Heart left ventricle (tissue), 16 donors: ENCODE measurements at regions of chr7 and their contacts with region 1.

Region 1: GRCh38 chr7:27160546-27161213 is 4.2 kb upstream of the HOXA7 start:
- DNase-seq: peak; percentile 76 to 92 (median 85)
- ATAC-seq: peak; percentile 35 to 85 (median 82)
- H3K4me3 ChIP-seq: peak overlapping the region; percentile 40 to 67 (median 56)
- H3K27ac ChIP-seq: peak overlapping the region in 1 of 12 donors; percentile 71
- H3K4me1 ChIP-seq: peaks cover 0 to 61% (median 19%) of the 10 kb centered on the region in 12 donors
- H3K27me3 ChIP-seq: peaks cover 79 to 100% (median 98%) of the 10 kb centered on the region in 9 donors
- CTCF ChIP-seq: peak; percentile 97 to 100 (median 100)
- POLR2A ChIP-seq: no peak

Region 2: DNA sequence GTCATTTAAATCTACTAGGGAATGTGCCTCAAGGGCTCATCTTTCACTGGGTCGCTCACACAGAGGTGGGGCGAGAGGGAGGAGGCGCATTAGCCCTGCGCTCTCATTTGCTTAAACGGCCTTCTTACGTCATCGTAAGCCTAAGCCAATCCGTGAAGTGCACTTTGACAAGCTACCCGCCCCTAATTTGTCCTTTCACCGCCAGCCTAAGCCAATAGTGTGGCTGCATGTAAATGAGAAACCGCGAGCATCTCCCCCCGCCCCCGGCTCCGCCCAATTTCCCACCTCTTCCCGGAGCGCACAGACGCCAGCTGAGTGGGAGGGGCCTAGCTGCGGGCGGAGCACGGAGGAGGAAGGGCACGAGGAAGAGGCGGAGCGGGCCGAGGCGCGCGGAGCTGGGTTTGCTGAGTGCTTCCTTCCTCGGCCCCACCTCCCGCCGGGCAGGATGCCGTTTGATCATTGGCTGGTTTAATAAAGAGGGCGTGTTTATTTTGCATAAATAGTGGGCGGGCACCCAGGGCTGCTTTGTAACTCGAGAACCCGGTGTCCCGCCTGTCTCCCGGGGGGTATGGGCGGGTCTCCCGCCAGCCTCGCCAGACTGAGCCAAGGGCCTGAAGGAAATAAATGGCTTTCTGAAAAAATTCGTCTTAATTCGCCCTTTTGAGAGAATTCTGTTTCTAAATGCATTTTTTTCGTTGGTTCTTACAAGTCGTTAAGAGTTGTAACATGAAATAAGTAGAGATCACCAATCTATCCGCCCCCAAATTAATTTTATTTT is 1298.2 kb before region 1 on chr7:
- intact Hi-C with region 1: loop called in 4 of 10 experiments (anchors 10 kb)
- DNase-seq: peak; percentile 80 to 92 (median 86)
- ATAC-seq: peak; percentile 83 to 96 (median 95)
- H3K4me3 ChIP-seq: peak overlapping the region in 5 of 12 donors; percentile 4 to 23 (median 7)
- H3K27ac ChIP-seq: no peak overlapping the region
- H3K4me1 ChIP-seq: peaks cover 0 to 29% (median under 1%) of the 10 kb centered on the region in 12 donors
- H3K27me3 ChIP-seq: peaks cover 78 to 100% (median 100%) of the 10 kb centered on the region in 9 donors
- CTCF ChIP-seq: no peak
- POLR2A ChIP-seq: no peak

Region 3: DNA sequence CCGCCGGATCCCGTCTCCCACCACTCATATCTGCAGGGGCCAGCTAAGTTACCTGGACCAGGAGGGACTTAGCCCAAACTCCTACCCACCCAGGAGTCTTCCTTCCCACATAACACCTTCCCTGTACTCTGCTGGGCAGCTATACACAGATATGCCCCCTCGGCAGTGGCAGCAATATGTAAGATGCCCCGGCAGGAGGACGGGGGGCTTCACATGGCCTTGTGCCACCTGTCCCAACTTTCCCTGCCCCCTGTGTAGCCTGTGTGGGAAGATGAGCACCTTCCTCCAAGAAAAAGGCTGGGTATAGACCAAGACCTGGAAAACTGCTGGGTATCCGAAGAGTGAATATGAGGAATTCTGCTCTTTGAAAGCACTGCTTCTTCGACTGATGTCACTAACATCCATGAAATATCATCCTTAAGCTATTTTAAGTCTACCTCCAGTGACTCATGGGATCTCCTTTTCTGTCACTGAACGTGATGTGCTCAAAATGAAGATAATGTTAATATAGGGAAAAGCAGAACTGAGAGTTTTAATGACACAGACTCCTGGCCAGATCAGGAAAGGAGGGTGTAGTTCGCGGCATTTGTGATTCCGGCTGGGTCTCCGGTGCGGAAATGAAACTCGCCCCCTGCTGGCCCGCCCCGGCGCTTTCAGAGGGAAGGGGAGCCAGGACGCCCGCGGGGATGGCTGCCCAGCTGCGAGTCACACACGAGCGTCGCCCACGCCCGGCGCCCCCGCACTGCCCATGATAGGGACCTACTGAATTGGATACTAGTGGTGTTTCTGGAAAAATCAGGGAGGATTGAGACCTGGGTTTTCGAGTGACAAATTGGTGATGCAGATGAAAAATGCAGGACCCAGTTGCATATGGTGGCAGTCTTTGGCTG is 1265.5 kb before region 1 on chr7:
- intact Hi-C with region 1: loop called in 6 of 10 experiments (anchors 5 to 10 kb)
- DNase-seq: peak; percentile 49 to 84 (median 61)
- ATAC-seq: peak; percentile 54 to 87 (median 80)
- H3K4me3 ChIP-seq: peak overlapping the region in 10 of 12 donors; percentile 4 to 37 (median 18)
- H3K27ac ChIP-seq: no peak overlapping the region
- H3K4me1 ChIP-seq: peaks cover 0 to 18% (median 4%) of the 10 kb centered on the region in 12 donors
- H3K27me3 ChIP-seq: peaks cover 0 to 62% (median 10%) of the 10 kb centered on the region in 9 donors
- CTCF ChIP-seq: peak; percentile 45 to 71 (median 63)
- POLR2A ChIP-seq: no peak

Region 4: DNA sequence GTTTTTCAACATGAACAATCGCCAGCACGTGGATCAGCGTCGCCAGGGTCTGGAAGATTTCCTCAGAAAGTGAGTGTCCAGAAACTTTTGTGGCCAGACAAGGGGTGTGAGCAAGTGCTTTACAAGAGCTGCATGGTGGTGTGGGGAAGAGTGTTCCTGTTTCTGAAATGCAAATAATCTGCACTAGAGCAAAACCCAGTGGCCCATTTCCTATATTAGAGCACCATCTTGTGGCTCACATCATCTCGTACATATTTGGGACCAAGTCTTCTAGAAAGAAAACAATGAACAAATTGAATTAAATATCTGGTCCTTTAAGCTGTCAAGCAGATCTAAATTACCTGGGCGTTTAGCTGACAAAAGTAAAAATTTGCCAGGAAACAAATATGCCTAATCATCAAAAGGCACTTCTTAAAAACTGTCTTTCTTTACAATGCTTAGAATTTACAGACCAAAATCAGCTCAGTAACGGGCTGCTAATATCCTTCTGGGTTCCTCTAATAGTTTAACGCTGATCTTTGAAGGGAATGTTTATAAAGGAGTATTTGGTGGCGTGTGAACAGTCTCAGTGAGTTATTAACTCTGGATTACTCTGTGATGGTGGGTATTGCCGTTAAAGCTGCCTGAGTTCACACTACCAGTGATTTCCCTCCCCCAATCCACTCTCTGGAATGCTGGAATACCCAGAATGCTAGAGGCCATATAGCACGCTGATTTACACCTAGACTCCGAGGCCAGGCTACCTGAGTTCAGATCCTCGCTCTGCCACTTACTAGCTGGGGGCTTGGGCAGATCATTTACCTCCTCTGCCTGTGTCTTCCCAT is 795.4 kb before region 1 on chr7:
- intact Hi-C with region 1: loop called (anchors 2 to 10 kb)
- DNase-seq: peak in 2 of 5 donors; percentile 31 to 40
- ATAC-seq: peak; percentile 47 to 87 (median 84)
- H3K4me3 ChIP-seq: no peak overlapping the region
- H3K27ac ChIP-seq: no peak overlapping the region
- H3K4me1 ChIP-seq: peaks cover 0 to 15% (median 0%) of the 10 kb centered on the region in 12 donors
- H3K27me3 ChIP-seq: peaks cover 0 to 44% (median 12%) of the 10 kb centered on the region in 9 donors
- CTCF ChIP-seq: peak; percentile 36 to 84 (median 74)
- POLR2A ChIP-seq: no peak

Region 5: GRCh38 chr7:26441002-26441521 is 719.6 kb before region 1 on chr7:
- intact Hi-C with region 1: no loop called
- DNase-seq: no peak
- ATAC-seq: no peak
- H3K4me3 ChIP-seq: no peak overlapping the region
- H3K27ac ChIP-seq: no peak overlapping the region
- H3K4me1 ChIP-seq: no peaks in the 10 kb centered on the region
- H3K27me3 ChIP-seq: peaks cover 0 to 4% (median 0%) of the 10 kb centered on the region in 9 donors
- CTCF ChIP-seq: no peak
- POLR2A ChIP-seq: no peak

Region 6: DNA sequence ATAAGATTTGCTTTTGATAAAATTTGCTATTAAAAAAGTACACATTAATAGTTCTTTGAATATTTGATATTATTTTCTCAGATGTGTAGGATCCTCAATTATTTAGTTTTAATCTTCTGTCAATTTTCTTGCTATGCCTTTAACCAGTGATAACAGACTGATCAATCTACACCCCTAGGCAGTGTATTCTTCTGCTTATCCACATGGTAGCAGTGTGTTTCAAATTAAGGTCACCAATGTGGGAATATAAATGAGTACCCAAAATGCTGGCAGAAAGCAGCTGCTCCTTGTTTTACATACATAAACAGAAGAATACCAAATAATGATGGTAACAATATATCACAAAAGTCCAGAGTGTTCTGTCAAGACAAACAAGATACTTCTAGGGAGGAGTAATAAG is 383.3 kb before region 1 on chr7:
- intact Hi-C with region 1: no loop called
- DNase-seq: no peak
- ATAC-seq: no peak
- H3K4me3 ChIP-seq: no peak overlapping the region
- H3K27ac ChIP-seq: no peak overlapping the region
- H3K4me1 ChIP-seq: no peaks in the 10 kb centered on the region
- H3K27me3 ChIP-seq: no peaks in the 10 kb centered on the region
- CTCF ChIP-seq: no peak
- POLR2A ChIP-seq: no peak

Region 7: GRCh38 chr7:26853788-26854393 is 306.8 kb before region 1 on chr7:
- intact Hi-C with region 1: loop called in 1 of 10 experiments (anchors 5 kb)
- DNase-seq: no peak
- ATAC-seq: no peak
- H3K4me3 ChIP-seq: no peak overlapping the region
- H3K27ac ChIP-seq: no peak overlapping the region
- H3K4me1 ChIP-seq: peaks cover 0 to 7% (median 0%) of the 10 kb centered on the region in 12 donors
- H3K27me3 ChIP-seq: peaks cover 0 to 71% (median 20%) of the 10 kb centered on the region in 9 donors
- CTCF ChIP-seq: peak in 11 of 12 donors; percentile 15 to 64 (median 51)
- POLR2A ChIP-seq: no peak